CD8-positive, alpha-beta memory T cell (primary cell): ENCODE measurements at regions of chr6 and their contacts with region 1.

Region 1: DNA sequence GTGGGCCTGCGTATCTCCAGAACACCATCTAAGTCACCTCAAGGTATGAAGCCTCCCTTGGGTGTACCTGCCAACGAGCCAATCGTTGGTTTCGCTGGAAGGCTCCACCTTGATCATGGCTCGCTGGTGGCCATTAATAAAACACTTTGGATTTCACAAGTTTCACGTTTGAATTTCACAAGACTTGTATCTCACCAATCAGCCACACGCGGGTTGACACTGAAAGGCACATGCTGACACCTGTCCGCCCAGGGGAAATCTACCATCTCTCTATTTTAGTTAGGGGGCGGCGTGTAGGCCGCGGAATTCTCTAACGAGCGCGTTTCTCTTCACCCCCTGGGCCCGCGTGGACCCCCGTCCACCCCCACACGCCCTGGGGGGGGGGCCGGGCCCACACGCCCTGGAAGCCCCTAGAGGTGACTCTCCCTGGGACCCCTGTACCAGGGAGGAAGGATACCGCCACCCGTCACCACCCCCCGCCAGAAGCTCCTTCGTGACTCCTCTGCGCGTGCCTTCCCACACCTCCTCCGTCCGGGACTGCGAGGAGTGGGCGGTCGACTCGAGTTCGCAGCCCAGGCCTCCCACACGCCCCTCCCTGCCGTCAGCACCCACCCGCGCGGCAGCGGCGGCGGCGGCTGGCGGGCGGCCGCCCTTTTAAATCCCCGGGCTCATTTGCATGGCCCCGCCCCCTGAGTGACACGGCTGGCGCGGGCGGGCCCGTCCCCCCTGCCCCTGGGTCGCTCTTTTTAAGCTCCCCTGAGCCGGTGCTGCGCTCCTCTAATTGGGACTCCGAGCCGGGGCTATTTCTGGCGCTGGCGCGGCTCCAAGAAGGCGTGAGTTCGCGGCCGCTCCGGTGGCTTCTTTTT is at the start of gene HMGA1:
- DNase-seq: peak; percentile 83 to 94 (median 87)
- H3K4me3 ChIP-seq: peak within 1 kb of the TSS; percentile 78
- H3K4me3 Mint-ChIP-seq: peak within 1 kb of the TSS; percentile 88 to 93 (median 92)
- H3K27ac ChIP-seq: peak within 1 kb of the TSS; percentile 90
- H3K27ac Mint-ChIP-seq: peak within 1 kb of the TSS; percentile 95 to 99 (median 97)
- H3K4me1 ChIP-seq: peaks cover 27% of the 10 kb centered on the region
- H3K4me1 Mint-ChIP-seq: peaks cover 25 to 45% (median 32%) of the 10 kb centered on the region in 3 donors
- H3K27me3 ChIP-seq: no peaks in the 10 kb centered on the region
- H3K27me3 Mint-ChIP-seq: no peaks in the 10 kb centered on the region
- total RNA-seq, gene HMGA1: 490 to 506 TPM

Region 2: DNA sequence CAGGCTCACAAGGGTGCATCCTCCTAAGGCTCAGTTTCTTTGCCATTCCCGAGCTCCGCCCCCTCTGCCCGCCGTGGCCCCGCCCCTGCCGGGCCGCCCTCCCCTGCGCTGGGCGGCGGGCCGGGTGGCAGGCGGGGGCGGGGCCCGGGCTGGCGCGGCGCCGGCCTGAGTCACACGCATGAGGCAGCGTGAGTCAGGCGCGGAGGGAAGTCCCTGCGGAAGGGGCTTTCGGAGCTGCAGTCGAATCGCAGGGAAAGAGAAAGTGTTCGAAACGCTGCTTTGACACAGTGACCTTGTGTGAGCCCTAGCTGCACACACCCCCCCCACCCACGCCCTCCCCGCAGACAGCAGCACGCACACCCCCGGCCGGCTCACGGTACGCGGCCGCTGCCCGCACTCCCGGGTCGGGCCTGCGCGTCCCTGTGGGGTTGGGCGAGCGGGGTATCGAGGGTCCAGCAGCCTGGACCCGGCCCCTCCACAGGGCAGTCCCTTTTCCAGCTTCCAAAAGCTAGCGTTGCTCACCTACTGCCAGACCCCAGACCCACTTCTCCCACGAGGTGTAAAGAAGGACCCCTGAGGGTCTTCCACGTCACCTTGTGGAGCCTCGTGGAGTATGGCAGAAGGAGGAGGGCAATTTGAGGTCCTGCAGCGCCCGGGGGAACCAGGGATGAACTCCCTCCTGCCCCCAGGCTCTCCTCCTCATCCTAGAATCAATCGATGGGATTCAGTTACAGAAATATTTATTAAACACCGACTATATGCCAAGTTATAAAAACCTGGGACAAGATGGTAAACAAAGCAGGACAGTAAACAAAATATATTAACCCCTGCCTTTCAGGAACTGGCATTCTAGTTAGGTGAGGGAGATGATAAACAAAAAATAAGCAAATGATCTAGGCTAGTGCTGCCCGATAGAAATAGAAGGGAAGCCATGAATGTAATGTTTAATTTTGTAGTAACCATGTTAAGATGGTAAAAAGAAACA is 12.1 kb before region 1 on chr6:
- CTCF ChIA-PET with region 1: interaction called, 3 read pairs
- POLR2A ChIA-PET with region 1: interaction called, 70 read pairs
- DNase-seq: peak; percentile 88 to 97 (median 93)
- H3K4me3 ChIP-seq: peak overlapping the region; percentile 72
- H3K4me3 Mint-ChIP-seq: peak overlapping the region; percentile 59 to 88 (median 71)
- H3K27ac ChIP-seq: peak overlapping the region; percentile 92
- H3K27ac Mint-ChIP-seq: peak overlapping the region; percentile 64 to 99 (median 92)
- H3K4me1 ChIP-seq: peaks cover 15% of the 10 kb centered on the region
- H3K4me1 Mint-ChIP-seq: peaks cover 6 to 20% (median 8%) of the 10 kb centered on the region in 3 donors
- H3K27me3 ChIP-seq: no peaks in the 10 kb centered on the region
- H3K27me3 Mint-ChIP-seq: no peaks in the 10 kb centered on the region

Region 3: DNA sequence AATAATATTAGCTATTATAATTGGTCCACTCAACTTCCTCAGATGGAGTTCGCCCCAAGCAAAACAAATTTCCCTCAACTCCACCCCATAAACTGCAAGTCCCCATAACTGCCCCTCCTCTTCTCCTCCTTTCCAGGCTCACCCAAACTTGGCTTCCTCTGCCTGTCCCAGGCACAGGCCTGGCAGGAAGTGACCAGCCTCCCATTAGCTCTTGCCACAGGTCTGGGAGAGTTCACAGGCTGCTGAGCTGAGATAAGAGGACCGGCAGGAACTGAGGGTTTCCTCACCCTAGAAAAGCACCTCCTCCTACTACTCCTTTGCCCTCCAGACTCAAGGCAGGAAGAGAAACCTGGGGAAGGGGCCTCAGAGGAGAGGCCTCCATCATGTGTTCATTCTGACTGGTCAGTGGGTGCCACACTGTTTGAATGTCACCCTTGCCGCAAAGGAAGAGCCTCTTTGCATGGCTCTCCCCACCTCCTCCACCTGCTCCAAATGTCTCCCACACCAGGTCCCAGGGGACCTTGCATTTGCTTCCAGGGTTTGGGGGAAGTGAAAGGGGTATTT is 37.0 kb after region 1 on chr6:
- CTCF ChIA-PET with region 1: no interaction called
- POLR2A ChIA-PET with region 1: no interaction called
- DNase-seq: no peak
- H3K4me3 ChIP-seq: no peak overlapping the region
- H3K4me3 Mint-ChIP-seq: no peak overlapping the region
- H3K27ac ChIP-seq: peak overlapping the region; percentile 55
- H3K27ac Mint-ChIP-seq: peak overlapping the region in 1 of 8 donors; percentile 63
- H3K4me1 ChIP-seq: no peaks in the 10 kb centered on the region
- H3K4me1 Mint-ChIP-seq: peaks cover 12 to 15% (median 13%) of the 10 kb centered on the region in 3 donors
- H3K27me3 ChIP-seq: no peaks in the 10 kb centered on the region
- H3K27me3 Mint-ChIP-seq: no peaks in the 10 kb centered on the region

Region 4: DNA sequence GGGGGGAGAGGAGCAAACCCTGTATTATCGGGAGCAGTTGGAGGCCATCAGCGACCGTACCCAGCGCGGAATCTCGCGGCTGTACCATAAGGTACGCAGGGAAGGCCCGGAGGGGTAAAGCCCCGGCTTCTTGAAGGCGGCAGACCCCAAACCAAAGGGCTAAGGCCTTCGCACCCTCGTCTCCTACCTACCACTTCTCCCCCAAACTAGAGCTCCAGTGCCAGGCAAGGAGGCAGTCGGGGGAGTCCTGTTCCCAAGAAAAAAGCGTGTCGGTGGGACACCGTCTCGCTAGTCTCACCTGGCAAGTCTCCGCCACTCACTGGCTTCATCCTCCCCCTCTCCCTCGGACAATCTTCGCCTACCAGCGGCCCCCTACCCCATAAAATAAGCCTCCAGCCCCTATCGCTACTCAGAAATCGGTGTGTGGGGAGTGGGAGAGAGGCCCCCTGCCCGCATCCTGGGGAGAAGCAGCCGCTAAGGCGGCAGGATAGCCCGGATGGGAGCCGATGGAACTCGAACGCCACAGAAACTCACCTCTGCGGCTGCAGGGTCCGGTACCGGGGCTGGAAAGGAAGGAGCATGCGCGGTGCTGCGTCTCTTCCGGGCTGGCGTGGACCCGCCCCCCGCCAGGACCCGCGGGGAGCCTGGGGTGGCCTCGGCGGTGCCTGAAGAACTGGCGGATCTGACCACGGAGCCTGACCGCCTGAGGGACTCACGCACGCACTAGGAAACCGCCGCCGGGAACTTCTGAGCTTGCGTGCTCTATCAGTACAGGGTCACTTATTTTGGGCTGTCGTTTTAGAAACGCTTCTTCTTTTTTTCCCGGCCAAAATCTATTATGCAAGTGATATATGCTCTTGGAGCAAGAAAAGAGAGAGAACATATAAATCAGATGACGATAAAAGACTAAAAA is 189.4 kb after region 1 on chr6 and contains the start of gene RPS10:
- CTCF ChIA-PET with region 1: interaction called, 3 read pairs
- POLR2A ChIA-PET with region 1: interaction called, 10 read pairs
- DNase-seq: peak; percentile 85 to 90 (median 86)
- H3K4me3 ChIP-seq: peak within 1 kb of the TSS; percentile 98
- H3K4me3 Mint-ChIP-seq: peak within 1 kb of the TSS; percentile 97 to 100 (median 99)
- H3K27ac ChIP-seq: peak within 1 kb of the TSS; percentile 94
- H3K27ac Mint-ChIP-seq: peak within 1 kb of the TSS; percentile 96 to 99 (median 98)
- H3K4me1 ChIP-seq: peaks cover 22% of the 10 kb centered on the region
- H3K4me1 Mint-ChIP-seq: peaks cover 26 to 45% (median 33%) of the 10 kb centered on the region in 3 donors
- H3K27me3 ChIP-seq: no peaks in the 10 kb centered on the region
- H3K27me3 Mint-ChIP-seq: no peaks in the 10 kb centered on the region
- total RNA-seq, gene RPS10: 1,999 to 2,032 TPM

Region 5: GRCh38 chr6:34610819-34611477 is 374.6 kb after region 1 on chr6:
- CTCF ChIA-PET with region 1: no interaction called
- POLR2A ChIA-PET with region 1: no interaction called
- DNase-seq: no peak
- H3K4me3 ChIP-seq: no peak overlapping the region
- H3K4me3 Mint-ChIP-seq: no peak overlapping the region
- H3K27ac ChIP-seq: no peak overlapping the region
- H3K27ac Mint-ChIP-seq: peak overlapping the region in 6 of 8 donors; percentile 18 to 54 (median 44)
- H3K4me1 ChIP-seq: no peaks in the 10 kb centered on the region
- H3K4me1 Mint-ChIP-seq: peaks cover 4 to 24% (median 23%) of the 10 kb centered on the region in 3 donors
- H3K27me3 ChIP-seq: no peaks in the 10 kb centered on the region
- H3K27me3 Mint-ChIP-seq: no peaks in the 10 kb centered on the region